K562 (cell line): ENCODE measurements at regions of chr19 and their contacts with region 1.

Region 1: DNA sequence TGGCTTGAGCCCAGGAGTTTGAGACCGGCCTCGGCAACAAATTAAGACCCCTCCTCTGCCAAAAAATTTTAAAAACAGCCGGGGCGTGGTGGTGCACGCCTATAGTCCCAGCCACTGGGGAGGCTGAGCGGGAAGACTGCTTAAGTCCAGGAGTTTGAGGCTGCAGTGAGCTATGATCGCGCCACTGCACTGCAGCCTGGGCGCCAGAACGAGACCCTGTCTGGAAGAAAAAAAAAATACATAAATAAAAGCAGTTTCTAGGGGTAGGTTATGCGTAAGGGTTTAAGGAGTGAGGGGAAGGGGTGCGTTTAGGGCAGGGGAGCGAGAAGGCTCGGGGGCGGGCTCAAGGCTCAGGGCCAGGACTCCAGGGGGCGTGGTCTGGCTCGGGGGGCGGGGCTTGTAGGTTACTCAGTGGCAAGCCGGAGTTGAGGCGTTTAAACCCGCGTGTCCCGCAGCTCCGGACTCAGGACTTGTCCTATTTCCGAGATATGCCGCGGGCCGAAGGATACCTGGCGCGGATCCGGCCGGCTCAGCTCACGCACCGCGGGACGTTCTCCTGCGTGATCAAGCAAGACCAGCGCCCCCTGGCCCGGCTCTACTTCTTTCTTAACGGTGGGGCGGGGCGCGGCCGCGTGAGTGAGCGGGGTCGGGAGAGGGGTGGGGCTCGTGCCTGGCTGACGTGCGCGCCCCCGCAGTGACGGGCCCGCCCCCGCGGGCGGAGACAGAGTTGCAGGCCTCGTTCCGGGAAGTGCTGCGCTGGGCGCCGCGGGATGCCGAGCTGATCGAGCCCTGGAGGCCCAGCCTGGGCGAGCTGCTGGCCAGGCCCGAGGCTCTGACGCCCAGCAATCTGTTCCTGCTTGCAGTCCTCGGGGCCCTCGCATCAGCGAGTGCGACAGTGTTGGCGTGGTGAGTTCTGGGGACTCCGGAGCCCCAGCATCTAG is 10.7 kb downstream of the SPACA6 start:
- DNase-seq: peak; percentile 95 to 97 (median 97)
- ATAC-seq: peak; percentile 85
- H3K4me3 ChIP-seq: peak overlapping the region; percentile 74
- H3K27ac ChIP-seq: peak overlapping the region; percentile 83
- H3K4me1 ChIP-seq: peaks cover 34 to 44% of the 10 kb centered on the region in 2 experiments
- H3K27me3 ChIP-seq: no peaks in the 10 kb centered on the region
- CTCF ChIP-seq: peak; percentile 53 to 60 (median 59); a peak in 5 of 6 replicates
- EP300 ChIP-seq: no peak
- POLR2A ChIP-seq: peak; percentile 84
- RAD21 ChIP-seq: peak in 1 of 2 experiments; percentile 18; a peak in 2 of 4 replicates

Region 2: GRCh38 chr19:51799034-51799773 is 95.4 kb after region 1 on chr19:
- CTCF ChIA-PET with region 1: no interaction called
- POLR2A ChIA-PET with region 1: interaction called, 3 read pairs
- in situ Hi-C with region 1: no loop called
- intact Hi-C with region 1: loop called (anchors 5 kb)
- DNase-seq: peak; percentile 59 to 88 (median 66)
- ATAC-seq: peak; percentile 81
- H3K4me3 ChIP-seq: no peak overlapping the region
- H3K27ac ChIP-seq: peak overlapping the region; percentile 97
- H3K4me1 ChIP-seq: peaks cover 31 to 74% of the 10 kb centered on the region in 2 experiments
- H3K27me3 ChIP-seq: no peaks in the 10 kb centered on the region
- CTCF ChIP-seq: peak; percentile 19 to 39 (median 38); a peak in 4 of 6 replicates
- EP300 ChIP-seq: peak; percentile 62
- POLR2A ChIP-seq: peak; percentile 54; the same call in 1 of the 2 replicates
- RAD21 ChIP-seq: no peak; a peak in 2 of 4 replicates